ENCODE measurements at regions of chr1 and their contacts with region 1.

Region 1: DNA sequence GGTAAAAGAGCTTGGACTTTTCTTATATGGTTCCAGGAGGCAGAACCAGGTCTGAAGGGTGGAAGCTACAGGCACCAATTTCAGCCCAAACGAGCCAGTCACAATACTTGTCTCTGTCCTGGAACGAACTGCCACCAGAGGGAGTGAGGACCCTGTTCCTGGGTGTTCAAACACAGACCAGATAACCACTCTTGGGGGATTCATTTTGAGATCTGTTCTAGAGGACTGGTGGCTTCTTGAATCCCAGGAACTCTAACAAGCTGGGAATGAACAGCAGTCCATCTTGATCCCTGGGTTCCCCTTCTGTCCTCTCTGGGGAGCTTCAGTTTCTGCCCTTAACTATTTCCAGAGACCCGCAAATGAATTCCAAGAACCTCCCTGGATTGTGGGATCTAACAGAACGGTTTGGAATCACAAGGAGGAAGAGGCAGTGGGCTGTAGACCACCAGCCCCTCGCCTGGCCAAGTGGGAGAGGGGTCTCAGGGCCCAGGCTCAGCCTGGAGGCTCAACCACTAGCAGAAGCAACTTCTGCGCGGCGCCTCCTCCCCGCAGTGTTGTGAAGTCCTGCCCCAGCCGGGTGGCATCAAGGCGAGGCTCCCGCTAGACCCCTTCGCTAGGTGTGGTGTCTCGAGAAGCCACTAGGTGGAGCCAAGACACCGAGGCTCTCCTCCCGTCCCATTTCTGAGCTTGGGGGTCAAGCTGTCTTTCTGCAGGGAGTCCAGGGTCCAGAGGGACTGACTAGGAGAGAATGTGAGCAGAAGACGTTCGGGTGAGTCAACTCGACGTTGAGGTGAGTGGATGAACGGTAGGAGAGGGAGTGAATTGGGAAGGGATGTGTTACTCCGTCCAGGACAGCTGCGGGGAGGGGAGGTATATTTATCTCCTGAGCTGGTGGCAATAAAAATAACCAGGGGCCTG is 12.1 kb upstream of the NES start:
- DNase-seq: peak; percentile 69
- H3K4me3 ChIP-seq: no peak overlapping the region
- H3K27ac ChIP-seq: no peak overlapping the region
- H3K4me1 ChIP-seq: peaks cover 19% of the 10 kb centered on the region
- H3K27me3 ChIP-seq: peaks cover 98% of the 10 kb centered on the region
- CTCF ChIP-seq: peak; percentile 93

Region 2: GRCh38 chr1:156725683-156726280 is 36.5 kb after region 1 on chr1:
- intact Hi-C with region 1: loop called (anchors 2 kb)
- DNase-seq: peak; percentile 88
- H3K4me3 ChIP-seq: peak overlapping the region; percentile 72
- H3K27ac ChIP-seq: peak overlapping the region; percentile 22
- H3K4me1 ChIP-seq: peaks cover 55% of the 10 kb centered on the region
- H3K27me3 ChIP-seq: no peaks in the 10 kb centered on the region
- CTCF ChIP-seq: peak; percentile 95

Measured in left ventricle myocardium inferior (tissue), 1 donor.